Naive thymus-derived CD4-positive, alpha-beta T cell (primary cell): ENCODE measurements at regions of chr6 and their contacts with region 1.

Region 1: GRCh38 chr6:710601-711571 is 17.9 kb upstream of the EXOC2 start:
- DNase-seq: peak; percentile 26 to 72 (median 63)
- ATAC-seq: peak; percentile 90
- H3K4me3 ChIP-seq: peak overlapping the region; percentile 69
- H3K4me3 Mint-ChIP-seq: peak overlapping the region; percentile 89 to 99 (median 98)
- H3K27ac ChIP-seq: peak overlapping the region; percentile 81
- H3K27ac Mint-ChIP-seq: peak overlapping the region; percentile 92 to 100 (median 99)
- H3K4me1 ChIP-seq: peaks cover 5 to 8% of the 10 kb centered on the region in 2 donors
- H3K4me1 Mint-ChIP-seq: peaks cover 8 to 42% (median 21%) of the 10 kb centered on the region in 7 donors
- H3K27me3 ChIP-seq: no peaks in the 10 kb centered on the region
- H3K27me3 Mint-ChIP-seq: peaks cover 0 to 13% (median 0%) of the 10 kb centered on the region in 5 donors

Region 2: DNA sequence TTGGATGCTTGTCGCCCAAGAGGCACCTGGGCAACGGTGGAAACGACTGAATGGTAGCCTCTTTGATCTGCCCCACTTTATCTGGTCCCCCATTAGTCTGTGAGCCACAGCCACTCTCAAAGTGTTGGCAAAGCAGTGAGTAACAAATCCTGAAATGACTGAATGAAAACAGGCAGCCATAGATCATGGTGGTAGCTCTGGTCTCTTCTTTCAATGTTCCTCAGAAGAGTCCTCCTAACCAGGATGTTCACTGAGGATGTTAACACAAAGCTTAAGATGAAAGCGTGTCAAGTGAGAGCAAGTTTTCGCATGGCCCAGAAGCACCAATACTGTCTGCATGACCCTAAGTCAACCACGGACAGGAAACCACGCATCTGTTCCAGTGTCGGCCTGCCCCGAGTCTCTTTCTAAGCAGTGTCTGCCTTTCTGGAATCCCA is 212.1 kb before region 1 on chr6:
- CTCF ChIA-PET with region 1: no interaction called
- POLR2A ChIA-PET with region 1: no interaction called
- intact Hi-C with region 1: loop called in 1 of 2 experiments (anchors 10 kb)
- DNase-seq: peak in 2 of 9 donors; percentile 25 to 57
- ATAC-seq: peak; percentile 68
- H3K4me3 ChIP-seq: no peak overlapping the region
- H3K4me3 Mint-ChIP-seq: peak overlapping the region in 9 of 10 donors; percentile 50 to 86 (median 78)
- H3K27ac ChIP-seq: peak overlapping the region; percentile 40
- H3K27ac Mint-ChIP-seq: peak overlapping the region; percentile 46 to 95 (median 75)
- H3K4me1 ChIP-seq: peaks cover 35 to 38% of the 10 kb centered on the region in 2 donors
- H3K4me1 Mint-ChIP-seq: peaks cover 33 to 83% (median 69%) of the 10 kb centered on the region in 7 donors
- H3K27me3 ChIP-seq: no peaks in the 10 kb centered on the region
- H3K27me3 Mint-ChIP-seq: no peaks in the 10 kb centered on the region

Region 3: GRCh38 chr6:692855-693722 is 17.8 kb before region 1 on chr6 and contains the start of gene EXOC2:
- CTCF ChIA-PET with region 1: no interaction called
- POLR2A ChIA-PET with region 1: interaction called, 27 read pairs
- intact Hi-C with region 1: loop called (anchors 1 kb)
- DNase-seq: peak; percentile 70 to 88 (median 81)
- ATAC-seq: peak; percentile 93
- H3K4me3 ChIP-seq: peak within 1 kb of the TSS; percentile 87
- H3K4me3 Mint-ChIP-seq: peak within 1 kb of the TSS; percentile 92 to 96 (median 95)
- H3K27ac ChIP-seq: peak within 1 kb of the TSS; percentile 83
- H3K27ac Mint-ChIP-seq: peak within 1 kb of the TSS; percentile 84 to 92 (median 91)
- H3K4me1 ChIP-seq: peaks cover 14 to 20% of the 10 kb centered on the region in 2 donors
- H3K4me1 Mint-ChIP-seq: peaks cover 23 to 45% (median 29%) of the 10 kb centered on the region in 7 donors
- H3K27me3 ChIP-seq: no peaks in the 10 kb centered on the region
- H3K27me3 Mint-ChIP-seq: no peaks in the 10 kb centered on the region
- total RNA-seq, gene EXOC2: 26.7 to 40.6 (median 38.8) TPM

Region 4: GRCh38 chr6:722077-722524 is 11.2 kb after region 1 on chr6:
- CTCF ChIA-PET with region 1: interaction called, 6 read pairs
- POLR2A ChIA-PET with region 1: no interaction called
- intact Hi-C with region 1: loop called in 1 of 2 experiments (anchors 1 kb)
- DNase-seq: peak; percentile 37 to 73 (median 61)
- ATAC-seq: peak; percentile 89
- H3K4me3 ChIP-seq: no peak overlapping the region
- H3K4me3 Mint-ChIP-seq: peak overlapping the region in 1 of 10 donors; percentile 9
- H3K27ac ChIP-seq: no peak overlapping the region
- H3K27ac Mint-ChIP-seq: peak overlapping the region in 1 of 9 donors; percentile 25
- H3K4me1 ChIP-seq: no peaks in the 10 kb centered on the region
- H3K4me1 Mint-ChIP-seq: peaks cover 0 to 11% (median 6%) of the 10 kb centered on the region in 7 donors
- H3K27me3 ChIP-seq: no peaks in the 10 kb centered on the region
- H3K27me3 Mint-ChIP-seq: peaks cover 0 to 29% (median 16%) of the 10 kb centered on the region in 5 donors